ENCODE measurements at regions of chr1 and their contacts with region 1.

Region 1: DNA sequence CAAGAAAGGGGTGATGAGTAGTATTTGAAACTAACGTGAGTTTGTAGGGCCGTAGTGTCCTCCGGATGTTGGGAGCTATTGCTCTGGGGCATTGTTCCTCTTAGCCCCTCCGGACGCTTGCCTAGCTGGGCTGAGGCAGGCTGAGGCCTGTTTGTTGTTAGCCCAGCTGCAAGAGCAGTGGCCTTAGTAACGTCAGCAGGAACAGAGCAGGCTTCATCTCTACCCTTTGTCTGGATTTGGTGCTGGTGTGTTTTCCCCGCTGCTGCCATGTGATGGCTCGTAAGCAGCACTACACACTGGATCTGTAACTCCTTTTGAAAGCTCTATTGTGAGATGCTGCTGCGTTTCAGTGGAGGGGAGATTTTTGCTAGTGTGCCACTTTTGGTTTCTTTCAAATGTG is 57.6 kb downstream of the DNM3 start:
- DNase-seq: no peak
- ATAC-seq: no peak
- H3K4me3 ChIP-seq: no peak overlapping the region
- H3K27ac ChIP-seq: no peak overlapping the region
- H3K4me1 ChIP-seq: no peaks in the 10 kb centered on the region
- H3K27me3 ChIP-seq: no peaks in the 10 kb centered on the region
- CTCF ChIP-seq: no peak
- EP300 ChIP-seq: no peak
- POLR2A ChIP-seq: no peak
- RAD21 ChIP-seq: no peak

Region 2: DNA sequence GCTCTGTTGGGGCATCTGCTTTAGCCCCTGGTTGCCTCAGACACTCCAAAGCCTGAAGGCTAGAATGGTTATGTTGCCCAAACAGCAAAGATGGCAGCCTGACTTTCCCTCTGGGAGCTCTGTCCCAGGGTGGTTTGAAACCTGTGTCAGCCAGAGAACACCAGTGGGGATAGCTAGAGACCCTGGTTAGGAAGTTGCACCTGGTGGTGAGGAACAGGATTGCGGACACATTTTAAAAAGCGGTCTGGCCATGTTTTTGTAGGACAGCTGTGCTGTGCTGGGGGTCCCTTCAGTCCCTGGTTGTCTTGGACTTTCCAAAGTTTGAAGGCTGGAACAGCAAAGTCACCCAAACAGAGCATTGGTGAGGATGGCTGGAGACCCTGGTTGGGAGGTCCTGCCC is 30.2 kb after region 1 on chr1:
- CTCF ChIA-PET with region 1: no interaction called
- POLR2A ChIA-PET with region 1: no interaction called
- RAD21 ChIA-PET with region 1: no interaction called
- SMC1A ChIA-PET with region 1: no interaction called
- in situ Hi-C with region 1: no loop called
- intact Hi-C with region 1: loop called (anchors 2 kb)
- DNase-seq: no peak
- ATAC-seq: peak; percentile 27; the same call in 1 of the 3 replicates
- H3K4me3 ChIP-seq: no peak overlapping the region
- H3K27ac ChIP-seq: no peak overlapping the region
- H3K4me1 ChIP-seq: no peaks in the 10 kb centered on the region
- H3K27me3 ChIP-seq: peaks cover 0 to 2% of the 10 kb centered on the region in 2 experiments; a peak in 1 of 4 replicates
- CTCF ChIP-seq: peak in 2 of 3 experiments; percentile 22 to 31; a peak in 2 of 6 replicates
- EP300 ChIP-seq: no peak
- POLR2A ChIP-seq: no peak
- RAD21 ChIP-seq: no peak

Region 3: GRCh38 chr1:172002725-172003345 is 103.9 kb after region 1 on chr1:
- CTCF ChIA-PET with region 1: no interaction called
- POLR2A ChIA-PET with region 1: no interaction called
- RAD21 ChIA-PET with region 1: no interaction called
- SMC1A ChIA-PET with region 1: no interaction called
- in situ Hi-C with region 1: no loop called
- intact Hi-C with region 1: no loop called
- DNase-seq: peak; percentile 28
- ATAC-seq: peak; percentile 72
- H3K4me3 ChIP-seq: no peak overlapping the region
- H3K27ac ChIP-seq: no peak overlapping the region
- H3K4me1 ChIP-seq: no peaks in the 10 kb centered on the region
- H3K27me3 ChIP-seq: no peaks in the 10 kb centered on the region; a peak in 1 of 4 replicates
- CTCF ChIP-seq: peak; percentile 56 to 85 (median 65)
- EP300 ChIP-seq: no peak
- POLR2A ChIP-seq: no peak
- RAD21 ChIP-seq: peak; percentile 97

Measured in GM12878 (cell line).